ENCODE measurements at regions of chr3 and their contacts with region 1.

Region 1: GRCh38 chr3:101518421-101518871 is 5.4 kb upstream of the SENP7 start:
- DNase-seq: peak; percentile 71
- H3K4me3 Mint-ChIP-seq: peak overlapping the region; percentile 73
- H3K27ac Mint-ChIP-seq: peak overlapping the region; percentile 97
- H3K4me1 Mint-ChIP-seq: peaks cover 61% of the 10 kb centered on the region
- H3K27me3 Mint-ChIP-seq: no peaks in the 10 kb centered on the region

Region 2: DNA sequence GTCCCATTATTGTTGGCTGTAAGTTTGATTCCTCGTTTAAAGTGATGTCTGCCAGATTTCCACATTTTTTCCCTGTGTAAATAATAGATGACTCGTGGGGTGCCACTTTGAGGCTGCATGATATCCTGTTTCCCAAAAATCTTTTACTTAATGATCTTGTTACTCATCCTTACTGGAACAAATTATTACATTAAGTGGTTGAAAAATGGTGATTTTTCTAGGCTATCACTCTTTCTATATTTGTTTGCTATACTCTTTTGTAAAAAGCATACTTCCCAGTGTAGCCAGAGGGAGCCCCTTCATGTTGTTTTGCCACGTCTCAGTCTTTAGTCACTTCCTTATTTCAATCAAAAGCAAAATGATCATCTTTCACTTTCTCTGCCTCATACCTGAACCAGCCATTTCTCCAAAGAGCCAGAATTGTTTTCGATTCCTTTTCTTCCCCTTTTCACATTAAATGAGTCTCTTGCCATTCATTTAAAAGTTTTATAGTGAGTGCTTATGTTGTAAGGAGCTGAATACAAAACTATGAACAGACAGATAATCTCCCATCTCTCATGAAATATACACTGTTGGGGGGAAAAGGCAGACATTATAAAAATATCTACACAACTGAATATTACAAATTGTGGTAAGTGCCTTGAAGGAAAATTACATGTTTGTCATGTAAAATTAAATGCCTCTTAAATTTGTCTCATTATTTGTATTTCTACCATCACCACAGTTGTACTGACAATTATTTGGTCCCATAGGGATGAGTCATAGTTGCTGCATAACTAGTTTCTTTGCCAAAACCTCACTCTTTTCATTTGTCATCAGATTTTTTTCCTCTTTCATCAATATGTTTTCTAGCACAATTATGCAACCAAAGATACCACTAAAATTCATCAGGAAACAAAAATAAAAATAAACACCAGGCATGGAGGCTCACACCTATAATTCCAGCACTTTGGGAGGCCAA is 867.5 kb before region 1 on chr3:
- CTCF ChIA-PET with region 1: no interaction called
- intact Hi-C with region 1: loop called (anchors 2 kb)
- DNase-seq: peak; percentile 57
- H3K4me3 Mint-ChIP-seq: peak overlapping the region; percentile 30
- H3K27ac Mint-ChIP-seq: peak overlapping the region; percentile 84
- H3K4me1 Mint-ChIP-seq: peaks cover 16% of the 10 kb centered on the region
- H3K27me3 Mint-ChIP-seq: no peaks in the 10 kb centered on the region

Region 3: GRCh38 chr3:101219842-101220560 is 298.4 kb before region 1 on chr3:
- CTCF ChIA-PET with region 1: no interaction called
- intact Hi-C with region 1: loop called (anchors 1 kb)
- DNase-seq: peak; percentile 8
- H3K4me3 Mint-ChIP-seq: no peak overlapping the region
- H3K27ac Mint-ChIP-seq: peak overlapping the region; percentile 61
- H3K4me1 Mint-ChIP-seq: peaks cover 16% of the 10 kb centered on the region
- H3K27me3 Mint-ChIP-seq: no peaks in the 10 kb centered on the region

Region 4: GRCh38 chr3:101531473-101532086 is 13.1 kb after region 1 on chr3:
- CTCF ChIA-PET with region 1: interaction called, 7 read pairs
- intact Hi-C with region 1: loop called (anchors 1 kb)
- DNase-seq: peak; percentile 55
- H3K4me3 Mint-ChIP-seq: no peak overlapping the region
- H3K27ac Mint-ChIP-seq: peak overlapping the region; percentile 79
- H3K4me1 Mint-ChIP-seq: peaks cover 36% of the 10 kb centered on the region
- H3K27me3 Mint-ChIP-seq: no peaks in the 10 kb centered on the region

Region 5: GRCh38 chr3:101561630-101562328 is 43.3 kb after region 1 on chr3 and contains the start of gene TRMT10C:
- CTCF ChIA-PET with region 1: interaction called, 6 read pairs
- intact Hi-C with region 1: loop called (anchors 1 kb)
- DNase-seq: peak; percentile 96
- H3K4me3 Mint-ChIP-seq: peak within 1 kb of the TSS; percentile 97
- H3K27ac Mint-ChIP-seq: peak within 1 kb of the TSS; percentile 94
- H3K4me1 Mint-ChIP-seq: peaks cover 40% of the 10 kb centered on the region
- H3K27me3 Mint-ChIP-seq: no peaks in the 10 kb centered on the region
- total RNA-seq, gene TRMT10C: 24.0 to 24.4 TPM

Region 6: DNA sequence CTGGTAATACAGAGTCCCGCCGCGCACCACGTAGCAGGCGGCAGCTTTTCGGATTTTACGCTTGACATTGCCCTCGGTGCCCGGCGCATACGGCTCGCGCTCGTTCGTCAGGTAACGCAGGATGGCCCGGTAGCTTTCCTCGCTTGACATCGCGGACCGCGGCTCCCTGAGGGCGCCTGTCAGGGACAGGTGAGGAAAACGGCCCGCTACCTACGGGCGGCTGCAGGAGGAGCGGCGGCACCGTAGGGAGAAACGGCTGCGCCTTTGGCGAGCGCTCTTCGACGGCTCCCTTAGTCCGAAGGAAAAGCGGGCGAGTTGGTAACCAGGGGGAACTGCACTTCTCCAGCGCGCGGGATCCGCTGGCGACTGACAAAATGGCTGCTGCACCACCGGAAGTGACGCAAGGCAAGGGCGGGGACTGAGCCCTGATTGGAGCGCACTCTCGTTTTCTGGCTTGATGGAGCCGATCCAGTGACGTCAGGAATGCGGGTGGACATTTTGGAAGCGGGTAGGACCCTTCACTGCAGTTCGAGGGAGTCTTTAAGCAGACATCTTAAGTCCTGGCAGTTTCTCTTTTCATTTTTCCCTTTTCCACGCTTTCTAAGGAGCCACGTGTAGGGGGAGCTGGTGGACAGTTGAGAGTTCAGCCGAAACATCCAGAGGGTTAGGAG is 158.5 kb after region 1 on chr3 and contains the start of gene ZBTB11:
- CTCF ChIA-PET with region 1: no interaction called
- intact Hi-C with region 1: loop called (anchors 1 kb)
- DNase-seq: peak; percentile 100
- H3K4me3 Mint-ChIP-seq: peak within 1 kb of the TSS; percentile 87
- H3K27ac Mint-ChIP-seq: peak within 1 kb of the TSS; percentile 95
- H3K4me1 Mint-ChIP-seq: peaks cover 54% of the 10 kb centered on the region
- H3K27me3 Mint-ChIP-seq: no peaks in the 10 kb centered on the region
- total RNA-seq, gene ZBTB11: 31.2 to 31.7 TPM

Region 7: GRCh38 chr3:101779047-101779821 is 260.8 kb after region 1 on chr3 and contains the start of gene NXPE3:
- CTCF ChIA-PET with region 1: no interaction called
- intact Hi-C with region 1: loop called (anchors 2 kb)
- DNase-seq: peak; percentile 96
- H3K4me3 Mint-ChIP-seq: peak within 1 kb of the TSS; percentile 95
- H3K27ac Mint-ChIP-seq: peak within 1 kb of the TSS; percentile 96
- H3K4me1 Mint-ChIP-seq: peaks cover 49% of the 10 kb centered on the region
- H3K27me3 Mint-ChIP-seq: no peaks in the 10 kb centered on the region
- total RNA-seq, gene NXPE3: 18.9 to 19.3 TPM

Measured in activated naive CD4-positive, alpha-beta T cell treated with anti-CD3 and anti-CD28 coated beads for 36 hours (primary cell).